ENCODE measurements at regions of chr11 and their contacts with region 1.

Region 1: DNA sequence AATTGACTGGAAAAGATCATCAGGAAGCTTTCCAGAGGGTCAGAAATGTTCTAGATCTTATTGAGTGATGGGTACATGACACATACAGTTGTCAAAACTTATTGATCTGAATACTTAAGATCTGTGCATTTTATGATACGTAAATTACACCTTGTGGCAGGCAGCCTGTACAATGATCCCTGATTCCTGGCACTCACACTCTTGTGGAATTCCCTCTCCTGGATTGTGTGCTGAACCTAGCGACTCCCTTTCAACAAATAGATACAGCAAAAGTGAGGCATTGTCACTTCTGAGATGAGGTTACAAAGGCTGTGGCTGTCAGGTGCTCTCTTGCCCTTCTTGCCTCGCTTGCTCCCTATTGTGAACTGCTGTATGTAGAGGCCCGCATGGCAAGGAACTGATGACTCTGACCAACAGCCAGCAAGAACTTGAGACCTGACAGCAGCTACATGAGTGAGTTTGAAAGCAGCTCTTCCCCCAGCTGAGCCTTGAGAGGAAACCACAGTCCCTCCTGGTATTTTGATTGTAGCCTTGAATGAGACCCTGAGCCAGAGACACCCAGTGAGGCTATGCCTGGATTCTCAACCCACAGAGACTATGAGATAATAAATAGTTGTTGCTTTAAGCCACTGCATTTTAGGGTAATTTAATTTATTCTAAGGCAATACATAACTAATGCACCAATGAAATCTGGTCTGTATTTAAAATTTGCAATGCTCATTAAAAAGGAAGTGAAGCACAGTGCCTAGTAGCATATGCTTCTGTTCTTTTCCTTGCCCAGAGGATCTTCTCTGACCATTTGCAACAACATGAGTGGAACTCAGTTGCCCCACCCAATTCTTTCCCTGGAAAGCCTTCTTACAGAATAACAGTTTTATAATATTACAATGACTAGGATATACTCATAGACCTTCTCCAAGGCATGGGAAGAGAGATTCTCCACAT is 60.5 kb upstream of the IZUMO1R start:
- DNase-seq: no peak
- H3K4me3 ChIP-seq: no peak overlapping the region
- H3K27ac ChIP-seq: no peak overlapping the region
- H3K4me1 ChIP-seq: no peaks in the 10 kb centered on the region
- H3K27me3 ChIP-seq: no peaks in the 10 kb centered on the region
- CTCF ChIP-seq: no peak

Region 2: GRCh38 chr11:94271885-94272372 is 28.1 kb after region 1 on chr11:
- CTCF ChIA-PET with region 1: no interaction called
- dilution Hi-C with region 1: no loop called
- in situ Hi-C with region 1: no loop called
- intact Hi-C with region 1: no loop called
- DNase-seq: peak; percentile 68
- H3K4me3 ChIP-seq: no peak overlapping the region
- H3K27ac ChIP-seq: no peak overlapping the region
- H3K4me1 ChIP-seq: no peaks in the 10 kb centered on the region
- H3K27me3 ChIP-seq: no peaks in the 10 kb centered on the region
- CTCF ChIP-seq: no peak

Region 3: GRCh38 chr11:94398101-94398500 is 154.3 kb after region 1 on chr11:
- CTCF ChIA-PET with region 1: no interaction called
- dilution Hi-C with region 1: no loop called
- in situ Hi-C with region 1: no loop called
- intact Hi-C with region 1: loop called (anchors 5 kb)
- DNase-seq: no peak
- H3K4me3 ChIP-seq: no peak overlapping the region
- H3K27ac ChIP-seq: no peak overlapping the region
- H3K4me1 ChIP-seq: peaks cover 11% of the 10 kb centered on the region
- H3K27me3 ChIP-seq: peaks cover 21% of the 10 kb centered on the region
- CTCF ChIP-seq: no peak

Measured in mammary epithelial cell (primary cell).